ENCODE measurements at regions of chr11 and their contacts with region 1.

Region 1: GRCh38 chr11:57800444-57801182 is 39.0 kb downstream of the CTNND1 start:
- DNase-seq: peak; percentile 56
- ATAC-seq: peak; percentile 95
- H3K4me3 ChIP-seq: no peak overlapping the region
- H3K27ac ChIP-seq: no peak overlapping the region
- H3K4me1 ChIP-seq: no peaks in the 10 kb centered on the region; the same call in 1 of the 2 replicates
- H3K27me3 ChIP-seq: no peaks in the 10 kb centered on the region
- CTCF ChIP-seq: peak; percentile 75 to 92 (median 83)
- EP300 ChIP-seq: no peak
- POLR2A ChIP-seq: no peak
- RAD21 ChIP-seq: peak; percentile 93

Region 2: DNA sequence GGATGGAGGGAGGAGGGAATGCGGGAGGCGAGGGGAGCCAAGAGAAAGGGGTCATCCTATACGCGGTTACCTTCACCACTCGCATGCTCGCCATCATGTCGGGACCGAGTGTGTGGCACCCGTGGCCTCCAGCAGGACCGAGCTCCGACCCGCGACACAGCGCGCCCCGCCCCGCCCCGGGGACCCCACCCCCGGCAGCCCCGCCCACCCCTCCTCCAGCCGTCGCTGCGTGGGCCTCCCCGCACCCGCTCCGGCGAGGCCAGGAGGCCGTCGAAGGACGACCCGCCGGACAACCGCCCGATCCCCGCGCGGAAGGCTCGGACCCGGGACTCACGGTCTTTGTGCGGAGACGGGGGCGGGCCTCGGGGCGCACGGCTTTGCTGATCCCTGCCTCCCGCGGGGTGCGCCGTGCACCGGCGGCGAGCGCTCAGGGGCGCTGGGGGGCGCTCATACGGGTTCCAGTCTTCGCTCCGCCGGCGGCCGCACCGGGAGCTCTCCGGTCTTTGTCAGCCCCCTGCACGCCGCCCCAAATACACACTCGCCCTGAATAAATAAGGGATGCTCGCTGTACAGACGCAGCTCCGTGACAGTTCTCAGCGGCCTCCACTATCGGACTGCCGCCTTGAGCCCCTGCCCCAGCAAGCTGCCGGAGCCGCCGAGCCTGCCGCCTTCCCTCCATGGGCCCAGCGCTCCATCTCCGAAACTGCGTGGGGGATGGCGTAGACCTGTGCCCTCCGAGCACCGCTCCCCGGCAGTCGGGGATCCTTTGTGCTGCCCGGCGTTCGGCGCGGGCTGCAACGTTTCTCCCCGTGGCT is 232.9 kb before region 1 on chr11 and contains the start of gene UBE2L6:
- CTCF ChIA-PET with region 1: interaction called, 11 read pairs
- POLR2A ChIA-PET with region 1: no interaction called
- RAD21 ChIA-PET with region 1: interaction called, 23 read pairs
- SMC1A ChIA-PET with region 1: interaction called, 9 read pairs
- in situ Hi-C with region 1: loop called (anchors 5 kb)
- intact Hi-C with region 1: no loop called
- DNase-seq: no peak
- ATAC-seq: peak; percentile 84
- H3K4me3 ChIP-seq: peak within 1 kb of the TSS; percentile 100
- H3K27ac ChIP-seq: peak within 1 kb of the TSS; percentile 87
- H3K4me1 ChIP-seq: peaks cover 4% of the 10 kb centered on the region
- H3K27me3 ChIP-seq: no peaks in the 10 kb centered on the region
- CTCF ChIP-seq: peak in 2 of 3 experiments; percentile 43 to 66; a peak in 3 of 6 replicates
- EP300 ChIP-seq: no peak
- POLR2A ChIP-seq: peak; percentile 59
- RAD21 ChIP-seq: no peak
- polyA plus RNA-seq, gene UBE2L6: 262 to 295 TPM

Region 3: GRCh38 chr11:57675176-57675941 is 125.3 kb before region 1 on chr11:
- CTCF ChIA-PET with region 1: interaction called, 22 read pairs
- POLR2A ChIA-PET with region 1: no interaction called
- RAD21 ChIA-PET with region 1: interaction called, 11 read pairs
- SMC1A ChIA-PET with region 1: interaction called, 16 read pairs
- in situ Hi-C with region 1: no loop called
- intact Hi-C with region 1: no loop called
- DNase-seq: no peak
- ATAC-seq: peak; percentile 54
- H3K4me3 ChIP-seq: peak overlapping the region; percentile 16; the same call in 1 of the 2 replicates
- H3K27ac ChIP-seq: 0 out of 2 replicates have a peak overlapping the region, but pooled peaks have one; percentile 24
- H3K4me1 ChIP-seq: peaks cover 9% of the 10 kb centered on the region; the same call in 1 of the 2 replicates
- H3K27me3 ChIP-seq: no peaks in the 10 kb centered on the region
- CTCF ChIP-seq: peak in 2 of 3 experiments; percentile 18 to 42; a peak in 2 of 6 replicates
- EP300 ChIP-seq: no peak
- POLR2A ChIP-seq: no peak
- RAD21 ChIP-seq: 0 out of 2 replicates have a peak, but pooled peaks have one; percentile 15

Region 4: GRCh38 chr11:57729479-57729878 is 71.1 kb before region 1 on chr11:
- CTCF ChIA-PET with region 1: interaction called, 11 read pairs
- POLR2A ChIA-PET with region 1: no interaction called
- RAD21 ChIA-PET with region 1: interaction called, 7 read pairs
- SMC1A ChIA-PET with region 1: interaction called, 19 read pairs
- in situ Hi-C with region 1: no loop called
- intact Hi-C with region 1: no loop called
- DNase-seq: no peak
- ATAC-seq: peak; percentile 64
- H3K4me3 ChIP-seq: no peak overlapping the region
- H3K27ac ChIP-seq: peak overlapping the region; percentile 6; the same call in 1 of the 2 replicates
- H3K4me1 ChIP-seq: 0 out of 2 replicates have a peak, but pooled peaks cover 6% of the 10 kb centered on the region
- H3K27me3 ChIP-seq: no peaks in the 10 kb centered on the region
- CTCF ChIP-seq: no peak
- EP300 ChIP-seq: no peak
- POLR2A ChIP-seq: no peak
- RAD21 ChIP-seq: no peak

Region 5: DNA sequence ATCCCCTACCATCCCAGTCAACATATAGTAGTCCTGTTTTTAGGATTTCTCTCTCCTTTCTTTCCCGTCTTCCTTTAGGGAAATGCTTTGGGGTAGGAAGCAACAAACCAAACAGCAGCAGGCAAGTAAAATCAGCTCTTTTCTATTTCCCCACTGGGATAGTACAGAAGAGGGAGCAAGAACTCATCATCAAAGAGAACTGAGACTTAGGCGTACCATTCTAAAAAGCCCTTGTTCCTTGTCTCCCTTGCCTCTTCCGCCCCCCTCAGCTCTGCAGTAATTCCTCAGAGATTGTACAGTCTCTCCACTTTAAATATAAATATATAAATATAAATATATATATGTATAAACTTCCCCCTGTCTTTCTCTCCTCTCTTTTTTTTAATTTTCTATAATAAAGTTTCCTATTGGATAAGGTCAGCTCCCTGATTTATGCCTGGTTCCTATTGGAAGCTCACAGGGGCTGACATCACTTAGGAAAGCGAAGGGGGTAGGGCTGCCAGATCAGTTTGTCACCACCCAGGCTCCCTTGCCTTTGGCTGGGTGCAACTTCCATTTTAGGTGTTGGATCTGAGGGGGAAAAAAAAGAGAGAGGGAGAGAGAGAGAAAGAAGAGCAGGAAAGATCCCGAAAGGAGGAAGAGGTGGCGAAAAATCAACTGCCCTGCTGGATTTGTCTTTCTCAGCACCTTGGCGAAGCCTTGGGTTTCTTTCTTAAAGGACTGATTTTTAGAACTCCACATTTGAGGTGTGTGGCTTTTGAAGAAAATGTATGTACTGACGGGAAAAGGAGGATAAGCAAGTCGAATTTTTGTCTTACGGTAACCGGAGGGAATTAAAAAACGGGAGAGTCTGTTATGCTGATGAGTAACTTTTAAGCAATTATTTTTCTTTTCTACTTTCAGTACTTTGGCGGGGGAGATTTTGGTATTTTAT is 39.0 kb before region 1 on chr11 and contains the start of gene CTNND1:
- CTCF ChIA-PET with region 1: interaction called, 169 read pairs
- POLR2A ChIA-PET with region 1: interaction called, 8 read pairs
- RAD21 ChIA-PET with region 1: interaction called, 141 read pairs
- SMC1A ChIA-PET with region 1: interaction called, 197 read pairs
- in situ Hi-C with region 1: no loop called
- intact Hi-C with region 1: no loop called
- DNase-seq: peak; percentile 77
- ATAC-seq: peak; percentile 89
- H3K4me3 ChIP-seq: peak within 1 kb of the TSS; percentile 70
- H3K27ac ChIP-seq: peak within 1 kb of the TSS; percentile 92
- H3K4me1 ChIP-seq: no peaks in the 10 kb centered on the region
- H3K27me3 ChIP-seq: no peaks in the 10 kb centered on the region
- CTCF ChIP-seq: no peak
- EP300 ChIP-seq: no peak
- POLR2A ChIP-seq: peak; percentile 67; the same call in 1 of the 2 replicates
- RAD21 ChIP-seq: no peak
- polyA plus RNA-seq, gene CTNND1: 4.7 to 6.5 TPM

Region 6: GRCh38 chr11:57785072-57785471 is 15.5 kb before region 1 on chr11:
- CTCF ChIA-PET with region 1: interaction called, 69 read pairs
- POLR2A ChIA-PET with region 1: interaction called, 11 read pairs
- RAD21 ChIA-PET with region 1: interaction called, 17 read pairs
- SMC1A ChIA-PET with region 1: interaction called, 21 read pairs
- in situ Hi-C with region 1: no loop called
- intact Hi-C with region 1: no loop called
- DNase-seq: no peak
- ATAC-seq: peak; percentile 79
- H3K4me3 ChIP-seq: no peak overlapping the region
- H3K27ac ChIP-seq: peak overlapping the region; percentile 73
- H3K4me1 ChIP-seq: peaks cover 34% of the 10 kb centered on the region
- H3K27me3 ChIP-seq: no peaks in the 10 kb centered on the region
- CTCF ChIP-seq: no peak
- EP300 ChIP-seq: peak in 1 of 2 experiments; percentile 29; a peak in 1 of 4 replicates
- POLR2A ChIP-seq: no peak
- RAD21 ChIP-seq: no peak

Region 7: DNA sequence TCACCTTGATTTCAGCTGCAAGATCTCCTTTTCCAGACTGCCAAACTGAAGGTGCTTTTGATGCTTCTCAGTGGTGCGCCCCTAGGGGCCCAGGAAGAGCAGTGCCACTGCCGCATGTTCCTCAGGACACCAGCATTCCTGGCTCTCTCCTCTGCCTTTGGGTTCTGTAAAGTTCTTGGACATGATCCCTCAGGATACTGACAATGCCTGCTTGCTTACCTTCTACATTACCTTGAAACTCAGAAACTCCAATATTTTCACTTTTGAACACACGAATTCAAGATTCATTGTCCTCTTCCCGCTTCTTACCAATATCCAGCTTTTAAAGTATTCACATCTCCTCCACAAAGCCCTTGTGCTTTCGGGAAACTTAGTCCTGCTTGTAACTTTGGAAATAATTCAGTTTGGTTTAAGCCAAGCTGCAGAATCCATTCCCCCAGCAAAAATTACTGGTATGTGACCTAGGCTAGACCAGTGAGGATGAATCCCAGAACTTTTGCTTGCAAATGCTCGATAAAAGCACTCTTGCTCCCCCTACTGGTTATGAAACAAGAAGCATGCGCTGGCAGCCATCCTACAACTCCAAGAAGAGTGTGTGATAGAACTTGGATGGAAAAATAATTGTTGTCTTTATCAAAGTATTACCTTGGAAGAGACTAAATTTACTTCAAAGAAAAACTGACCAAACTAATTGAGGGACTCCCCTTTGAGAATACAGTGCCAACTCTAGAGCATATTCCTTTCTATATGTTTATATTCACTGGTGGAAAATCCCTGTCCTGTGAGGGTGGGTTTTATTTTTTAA is 723.8 kb after region 1 on chr11:
- CTCF ChIA-PET with region 1: interaction called, 6 read pairs
- POLR2A ChIA-PET with region 1: no interaction called
- RAD21 ChIA-PET with region 1: interaction called, 3 read pairs
- SMC1A ChIA-PET with region 1: interaction called, 11 read pairs
- in situ Hi-C with region 1: loop called (anchors 25 kb)
- intact Hi-C with region 1: no loop called
- DNase-seq: peak; percentile 39
- ATAC-seq: peak; percentile 68
- H3K4me3 ChIP-seq: peak overlapping the region; percentile 49; the same call in 1 of the 2 replicates
- H3K27ac ChIP-seq: peak overlapping the region; percentile 75
- H3K4me1 ChIP-seq: peaks cover 30% of the 10 kb centered on the region
- H3K27me3 ChIP-seq: no peaks in the 10 kb centered on the region
- CTCF ChIP-seq: peak; percentile 70 to 77 (median 72)
- EP300 ChIP-seq: no peak
- POLR2A ChIP-seq: peak; percentile 21; the same call in 1 of the 2 replicates
- RAD21 ChIP-seq: peak; percentile 72

Measured in GM12878 (cell line).